ENCODE measurements at regions of chr4 and their contacts with region 1.

Region 1: DNA sequence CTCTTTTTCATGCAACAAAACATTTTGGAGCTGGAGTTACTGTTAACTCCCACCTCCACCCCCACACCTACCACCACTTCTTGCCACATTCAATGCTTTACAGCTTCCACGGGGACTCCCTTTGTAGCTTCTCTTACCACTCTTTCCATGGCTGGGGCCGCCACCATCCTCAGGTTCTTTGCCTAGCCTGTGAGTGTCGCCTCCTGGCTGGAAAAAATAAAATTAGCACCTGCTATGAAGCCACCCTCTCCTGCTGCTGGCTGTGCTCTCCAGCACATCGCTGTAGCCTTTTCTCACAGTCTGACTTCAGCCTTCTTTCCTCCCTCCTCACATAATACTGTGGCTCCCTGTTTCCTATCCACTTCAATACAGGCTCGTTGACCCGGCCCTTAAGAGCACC is 114.4 kb downstream of the FRAS1 start:
- DNase-seq: peak; percentile 49
- ATAC-seq: peak; percentile 74
- H3K4me3 Mint-ChIP-seq: no peak overlapping the region
- H3K27ac Mint-ChIP-seq: peak overlapping the region; percentile 17; the same call in 1 of the 2 replicates
- H3K4me1 Mint-ChIP-seq: peaks cover 79% of the 10 kb centered on the region
- H3K27me3 Mint-ChIP-seq: no peaks in the 10 kb centered on the region
- CTCF ChIP-seq: no peak

Region 2: DNA sequence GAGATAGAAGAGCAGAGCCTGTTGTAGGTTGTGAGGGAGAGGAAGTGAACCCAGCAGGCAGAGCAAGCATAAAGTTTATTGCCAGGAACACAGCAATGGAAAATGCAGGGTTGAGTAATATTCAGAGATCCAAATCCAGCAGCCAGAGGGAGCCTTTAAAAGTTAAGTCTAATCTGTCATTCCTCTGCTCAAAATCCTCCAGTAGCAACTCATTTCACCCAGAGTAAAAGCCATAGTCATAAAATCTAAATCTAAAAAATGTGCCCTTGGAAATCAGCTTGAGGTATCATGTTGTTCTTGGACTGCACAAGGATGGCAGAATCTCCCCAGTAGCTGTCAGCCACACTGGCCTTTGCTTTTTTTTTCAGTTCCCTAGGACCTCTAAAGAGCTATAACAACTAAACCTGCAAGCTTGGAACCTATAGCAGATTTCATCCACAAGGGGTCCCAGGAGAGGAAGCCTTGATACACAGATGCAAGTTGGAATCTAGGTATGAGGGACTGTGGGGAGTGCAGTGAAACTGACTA is 177.2 kb before region 1 on chr4:
- CTCF ChIA-PET with region 1: interaction called, 13 read pairs
- POLR2A ChIA-PET with region 1: no interaction called
- DNase-seq: peak; percentile 56
- ATAC-seq: peak; percentile 99
- H3K4me3 Mint-ChIP-seq: no peak overlapping the region
- H3K27ac Mint-ChIP-seq: no peak overlapping the region; the same call in 1 of the 2 replicates
- H3K4me1 Mint-ChIP-seq: peaks cover 44% of the 10 kb centered on the region
- H3K27me3 Mint-ChIP-seq: no peaks in the 10 kb centered on the region
- CTCF ChIP-seq: peak; percentile 51

Region 3: DNA sequence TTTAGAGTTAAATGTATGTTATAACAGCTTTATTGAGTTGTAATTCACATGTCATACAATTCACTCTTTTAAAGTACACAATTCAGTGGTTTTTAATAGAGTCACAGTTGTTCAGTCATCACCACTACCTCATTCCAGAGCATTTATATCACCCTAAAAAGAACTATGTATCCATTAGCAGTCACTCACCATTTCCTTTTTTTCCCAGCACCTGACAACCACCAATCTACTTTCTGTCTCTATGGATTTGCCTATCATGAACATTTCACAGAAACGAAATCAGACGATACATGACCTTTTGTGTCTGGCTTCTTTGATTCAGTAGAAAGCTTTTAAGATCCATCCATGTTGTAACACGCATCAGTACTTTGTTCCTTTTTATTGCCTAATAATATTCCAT is 167.2 kb before region 1 on chr4:
- CTCF ChIA-PET with region 1: no interaction called
- POLR2A ChIA-PET with region 1: no interaction called
- DNase-seq: no peak
- ATAC-seq: no peak
- H3K4me3 Mint-ChIP-seq: no peak overlapping the region
- H3K27ac Mint-ChIP-seq: no peak overlapping the region
- H3K4me1 Mint-ChIP-seq: peaks cover 5% of the 10 kb centered on the region
- H3K27me3 Mint-ChIP-seq: no peaks in the 10 kb centered on the region; the same call in 1 of the 2 replicates
- CTCF ChIP-seq: no peak

Region 4: DNA sequence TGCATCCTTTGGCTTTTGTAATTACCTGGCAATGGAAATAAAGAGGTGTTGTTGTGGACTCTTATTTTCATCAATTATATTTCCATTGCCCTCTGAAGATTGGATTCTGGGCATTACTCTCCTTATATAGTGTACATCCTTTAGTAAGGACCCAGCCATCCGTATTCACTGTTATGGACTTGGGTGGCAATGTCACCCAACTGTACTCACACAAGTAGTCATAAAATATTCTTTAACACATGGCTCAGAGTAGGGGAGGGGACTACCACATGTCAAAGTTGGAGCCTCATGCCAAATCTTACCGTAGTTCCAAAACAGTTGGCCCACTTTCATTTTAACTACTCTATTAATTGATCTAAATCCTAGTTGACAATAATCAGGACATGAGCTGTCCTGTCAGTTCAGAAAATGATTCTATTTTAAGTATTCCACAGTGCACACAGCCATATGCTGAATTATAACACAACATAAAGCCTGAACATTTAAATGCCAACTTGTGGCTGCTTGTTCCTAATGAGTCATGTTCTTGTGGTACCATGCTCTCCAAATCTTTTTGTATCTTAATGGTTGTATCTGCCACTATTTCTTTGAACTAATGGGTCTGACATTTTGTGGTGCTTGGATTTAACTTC is 109.4 kb before region 1 on chr4:
- CTCF ChIA-PET with region 1: interaction called, 60 read pairs
- POLR2A ChIA-PET with region 1: interaction called, 12 read pairs
- DNase-seq: no peak
- ATAC-seq: no peak
- H3K4me3 Mint-ChIP-seq: no peak overlapping the region
- H3K27ac Mint-ChIP-seq: no peak overlapping the region
- H3K4me1 Mint-ChIP-seq: peaks cover 59% of the 10 kb centered on the region
- H3K27me3 Mint-ChIP-seq: no peaks in the 10 kb centered on the region; the same call in 1 of the 2 replicates
- CTCF ChIP-seq: no peak

Region 5: DNA sequence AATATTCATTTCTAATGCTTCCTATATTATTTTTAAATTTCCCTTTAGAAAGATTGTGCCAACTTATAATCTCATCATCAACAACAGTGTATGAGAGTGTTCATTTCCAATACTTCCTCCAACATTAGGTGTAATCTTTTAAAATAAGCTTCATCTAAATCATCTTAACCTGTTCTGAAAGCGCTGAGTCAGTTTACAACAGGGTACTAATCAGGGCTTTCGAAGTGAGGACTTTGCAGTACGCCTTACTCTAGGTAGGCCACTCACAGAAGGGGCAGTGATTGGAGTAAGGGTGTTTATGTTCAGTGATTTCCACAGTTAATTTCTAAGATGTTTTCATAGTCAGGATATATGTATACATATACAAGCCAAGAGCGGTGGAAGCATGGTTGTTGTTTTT is 26.5 kb before region 1 on chr4:
- CTCF ChIA-PET with region 1: no interaction called
- POLR2A ChIA-PET with region 1: no interaction called
- DNase-seq: no peak
- ATAC-seq: no peak
- H3K4me3 Mint-ChIP-seq: no peak overlapping the region
- H3K27ac Mint-ChIP-seq: peak overlapping the region; percentile 75
- H3K4me1 Mint-ChIP-seq: peaks cover 33% of the 10 kb centered on the region
- H3K27me3 Mint-ChIP-seq: no peaks in the 10 kb centered on the region
- CTCF ChIP-seq: no peak

Region 6: DNA sequence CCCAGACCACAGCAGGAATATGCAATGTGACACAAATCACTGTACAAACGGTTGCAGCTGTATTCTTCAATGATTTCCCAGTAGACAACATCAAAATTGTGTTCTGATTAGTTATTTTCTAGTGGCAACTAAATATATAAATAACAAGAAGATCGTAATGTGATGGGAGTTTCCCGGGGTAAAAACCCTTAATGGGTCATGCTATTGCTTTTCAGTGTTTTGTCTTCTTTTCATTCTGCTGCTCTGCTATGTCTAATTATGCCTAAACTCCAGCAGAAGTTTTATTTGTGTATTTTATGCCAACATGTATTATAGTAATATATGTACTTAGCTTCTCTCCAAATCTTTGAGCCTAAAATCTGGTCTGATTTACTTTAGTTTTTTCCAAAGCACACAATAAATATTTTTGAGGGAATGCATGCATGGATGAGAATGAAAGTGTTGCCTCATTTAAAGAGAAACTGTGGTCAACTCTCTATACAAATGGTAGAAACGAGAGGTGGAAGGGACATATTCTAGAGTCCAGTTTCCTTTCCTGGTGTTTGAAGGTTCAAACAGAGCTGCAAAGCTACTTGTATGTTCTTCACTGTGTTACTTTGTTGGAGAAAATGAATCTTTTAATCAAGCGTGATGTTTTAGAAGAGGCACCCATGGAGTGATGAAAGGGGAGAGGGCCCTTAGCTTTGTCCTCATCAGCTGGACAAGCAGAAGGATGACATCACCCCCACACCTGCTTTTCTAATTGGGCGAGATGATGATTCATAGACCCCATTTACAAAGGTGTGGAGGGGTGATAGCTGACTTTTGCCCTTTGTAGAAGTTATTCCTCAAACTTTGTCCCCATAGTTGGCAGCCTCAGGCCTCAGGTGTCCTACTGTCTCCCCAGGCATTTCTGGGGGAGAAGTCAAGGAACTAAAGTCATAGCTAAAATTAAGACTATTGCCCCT is 15.4 kb after region 1 on chr4:
- CTCF ChIA-PET with region 1: interaction called, 15 read pairs
- POLR2A ChIA-PET with region 1: no interaction called
- DNase-seq: no peak
- ATAC-seq: no peak
- H3K4me3 Mint-ChIP-seq: no peak overlapping the region
- H3K27ac Mint-ChIP-seq: peak overlapping the region; percentile 51; the same call in 1 of the 2 replicates
- H3K4me1 Mint-ChIP-seq: peaks cover 40% of the 10 kb centered on the region
- H3K27me3 Mint-ChIP-seq: no peaks in the 10 kb centered on the region
- CTCF ChIP-seq: no peak

Region 7: DNA sequence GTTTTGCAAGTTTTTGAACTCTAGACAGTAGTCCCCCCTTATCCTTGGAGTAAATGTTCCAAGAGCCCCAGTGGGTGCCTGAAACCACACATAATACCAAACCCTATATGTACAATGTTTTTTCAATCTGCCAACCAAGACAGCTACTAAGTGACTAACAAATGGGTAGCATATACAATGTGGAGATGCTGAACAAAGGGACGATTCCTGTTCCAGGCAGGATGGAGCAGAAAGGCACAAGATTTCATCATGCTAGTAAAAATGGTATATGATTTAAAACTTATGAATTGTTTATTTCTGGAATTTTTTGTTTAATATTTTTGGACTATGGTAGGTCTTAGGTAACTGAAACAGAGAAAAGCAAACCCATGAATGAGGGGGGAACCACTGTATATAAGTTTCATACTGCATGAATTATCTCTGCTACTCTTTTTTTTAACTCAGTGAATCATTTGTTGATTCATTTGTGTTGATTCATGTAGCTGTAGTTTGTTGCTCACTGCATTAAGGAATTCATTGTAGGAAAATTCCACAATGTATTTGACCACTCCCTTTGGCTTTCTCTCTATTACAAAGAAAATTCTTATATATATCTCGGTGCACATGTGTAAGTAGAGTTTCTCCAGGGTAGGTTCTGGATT is 358.2 kb after region 1 on chr4:
- CTCF ChIA-PET with region 1: no interaction called
- POLR2A ChIA-PET with region 1: no interaction called
- DNase-seq: no peak
- ATAC-seq: no peak
- H3K4me3 Mint-ChIP-seq: no peak overlapping the region
- H3K27ac Mint-ChIP-seq: no peak overlapping the region
- H3K4me1 Mint-ChIP-seq: no peaks in the 10 kb centered on the region; the same call in 1 of the 2 replicates
- H3K27me3 Mint-ChIP-seq: no peaks in the 10 kb centered on the region
- CTCF ChIP-seq: no peak

Measured in WTC11 (cell line).